Psoas muscle (tissue), 8 donors: ENCODE measurements at regions of chr12 and their contacts with region 1.

Region 1: DNA sequence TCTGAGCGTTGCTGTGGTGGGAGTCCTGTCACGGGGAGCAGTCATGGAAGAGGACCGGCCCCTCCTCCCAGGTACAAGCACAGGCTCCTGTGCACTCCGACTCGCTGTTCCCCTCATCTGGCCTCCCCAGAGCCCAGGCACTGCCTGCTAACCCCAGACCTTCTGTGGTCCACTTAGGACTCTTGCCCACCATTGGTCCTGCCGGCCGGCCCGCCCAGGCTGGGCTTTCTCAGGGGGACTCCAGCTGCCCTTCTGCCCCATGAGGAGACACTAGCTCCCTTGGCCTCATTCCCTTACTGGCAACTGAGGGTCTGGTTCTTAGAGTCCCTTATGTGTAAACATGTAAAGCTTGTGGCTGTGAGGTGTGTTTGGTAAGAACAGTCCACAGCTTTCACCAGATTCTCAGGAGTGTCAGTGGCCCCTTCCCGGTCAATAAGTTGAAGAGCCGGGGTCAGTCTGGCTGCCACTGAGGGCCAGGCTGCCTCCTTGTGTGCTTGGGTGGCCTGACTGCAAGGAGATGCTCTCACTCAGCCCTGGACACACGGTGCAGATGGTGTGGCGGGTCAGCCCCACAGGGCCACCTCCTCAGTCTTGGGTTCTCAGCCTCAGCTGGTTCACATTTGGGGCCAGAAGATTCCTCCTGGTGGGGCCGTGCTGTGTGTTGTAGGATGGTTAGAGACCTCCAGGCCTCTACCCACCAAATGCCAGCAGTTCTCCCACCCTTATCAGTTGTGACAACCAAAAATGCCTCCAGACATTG is 43.6 kb downstream of the DDX51 start:
- DNase-seq: no peak
- ATAC-seq: no peak
- H3K4me3 ChIP-seq: no peak overlapping the region
- H3K27ac ChIP-seq: no peak overlapping the region
- H3K4me1 ChIP-seq: no peaks in the 10 kb centered on the region
- H3K27me3 ChIP-seq: no peaks in the 10 kb centered on the region
- CTCF ChIP-seq: no peak

Region 2: GRCh38 chr12:131755305-131756113 is 345.0 kb before region 1 on chr12:
- intact Hi-C with region 1: no loop called
- DNase-seq: no peak
- ATAC-seq: no peak
- H3K4me3 ChIP-seq: no peak overlapping the region
- H3K27ac ChIP-seq: no peak overlapping the region
- H3K4me1 ChIP-seq: no peaks in the 10 kb centered on the region
- H3K27me3 ChIP-seq: no peaks in the 10 kb centered on the region
- CTCF ChIP-seq: peak; percentile 8

Region 3: GRCh38 chr12:131818821-131819585 is 281.5 kb before region 1 on chr12:
- intact Hi-C with region 1: no loop called
- DNase-seq: peak; percentile 73 to 83
- ATAC-seq: peak in 2 of 4 donors; percentile 65 to 66
- H3K4me3 ChIP-seq: no peak overlapping the region
- H3K27ac ChIP-seq: no peak overlapping the region
- H3K4me1 ChIP-seq: no peaks in the 10 kb centered on the region
- H3K27me3 ChIP-seq: peaks cover 0 to 7% (median 2%) of the 10 kb centered on the region in 3 donors
- CTCF ChIP-seq: no peak

Region 4: GRCh38 chr12:132118876-132119275 is 18.4 kb after region 1 on chr12:
- intact Hi-C with region 1: loop called in 1 of 2 experiments (anchors 1 kb)
- DNase-seq: no peak
- ATAC-seq: no peak
- H3K4me3 ChIP-seq: no peak overlapping the region
- H3K27ac ChIP-seq: no peak overlapping the region
- H3K4me1 ChIP-seq: no peaks in the 10 kb centered on the region
- H3K27me3 ChIP-seq: no peaks in the 10 kb centered on the region
- CTCF ChIP-seq: no peak

Region 5: GRCh38 chr12:132475304-132476037 is 375.0 kb after region 1 on chr12:
- intact Hi-C with region 1: no loop called
- DNase-seq: peak in 1 of 2 donors; percentile 72
- ATAC-seq: peak in 2 of 4 donors; percentile 13 to 56
- H3K4me3 ChIP-seq: no peak overlapping the region
- H3K27ac ChIP-seq: no peak overlapping the region
- H3K4me1 ChIP-seq: no peaks in the 10 kb centered on the region
- H3K27me3 ChIP-seq: peaks cover 0 to 19% (median 3%) of the 10 kb centered on the region in 3 donors
- CTCF ChIP-seq: no peak